Heart right ventricle (tissue), 16 donors: ENCODE measurements at regions of chr10 and their contacts with region 1.

Region 1: DNA sequence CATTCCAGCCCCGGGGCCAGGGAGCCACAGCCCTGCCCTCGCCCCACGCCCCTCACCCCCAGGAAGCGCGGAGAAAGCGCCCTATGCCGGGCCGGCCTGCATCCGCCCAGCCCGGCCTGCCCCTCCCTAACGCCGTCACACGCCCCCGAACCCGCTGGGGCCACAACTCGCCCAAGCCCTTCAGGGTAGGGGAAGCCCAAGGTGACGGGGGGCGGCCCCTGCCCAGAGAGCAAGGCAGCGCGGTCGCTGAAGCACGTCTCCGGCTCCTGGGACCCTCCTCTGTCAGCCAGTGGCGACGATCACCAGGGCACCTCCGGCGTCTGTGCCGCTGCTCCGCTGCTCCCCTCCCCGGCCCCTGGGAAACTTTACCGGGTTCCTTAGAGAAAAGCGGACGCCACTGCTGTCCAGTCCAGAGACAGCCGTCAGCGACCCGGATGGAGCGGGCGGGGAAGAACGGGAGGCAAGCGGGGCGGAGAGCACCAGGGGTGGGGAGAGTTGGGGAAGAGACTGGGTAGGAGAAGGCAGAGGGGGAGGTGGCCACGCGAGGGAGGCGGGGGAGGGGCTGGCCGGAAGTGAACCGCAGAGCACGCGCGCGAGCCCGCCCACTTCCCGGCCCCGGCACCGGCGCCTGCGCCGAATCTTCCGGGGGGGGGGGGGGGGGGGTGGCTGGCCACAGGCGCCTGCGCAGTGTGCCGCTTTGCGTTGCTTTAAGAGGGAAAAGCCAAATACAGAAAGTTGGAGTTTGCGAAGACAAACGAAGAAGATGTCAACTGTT is at the start of gene HERC4:
- DNase-seq: peak; percentile 96
- ATAC-seq: peak; percentile 98 to 99 (median 99)
- H3K4me3 ChIP-seq: peak within 1 kb of the TSS; percentile 76 to 98 (median 94)
- H3K27ac ChIP-seq: peak within 1 kb of the TSS; percentile 94 to 99 (median 98)
- H3K4me1 ChIP-seq: peaks cover 2 to 50% (median 34%) of the 10 kb centered on the region in 9 donors
- H3K27me3 ChIP-seq: no peaks in the 10 kb centered on the region
- CTCF ChIP-seq: no peak
- total RNA-seq, gene HERC4: 23.3 to 42.1 (median 32.3) TPM

Region 2: DNA sequence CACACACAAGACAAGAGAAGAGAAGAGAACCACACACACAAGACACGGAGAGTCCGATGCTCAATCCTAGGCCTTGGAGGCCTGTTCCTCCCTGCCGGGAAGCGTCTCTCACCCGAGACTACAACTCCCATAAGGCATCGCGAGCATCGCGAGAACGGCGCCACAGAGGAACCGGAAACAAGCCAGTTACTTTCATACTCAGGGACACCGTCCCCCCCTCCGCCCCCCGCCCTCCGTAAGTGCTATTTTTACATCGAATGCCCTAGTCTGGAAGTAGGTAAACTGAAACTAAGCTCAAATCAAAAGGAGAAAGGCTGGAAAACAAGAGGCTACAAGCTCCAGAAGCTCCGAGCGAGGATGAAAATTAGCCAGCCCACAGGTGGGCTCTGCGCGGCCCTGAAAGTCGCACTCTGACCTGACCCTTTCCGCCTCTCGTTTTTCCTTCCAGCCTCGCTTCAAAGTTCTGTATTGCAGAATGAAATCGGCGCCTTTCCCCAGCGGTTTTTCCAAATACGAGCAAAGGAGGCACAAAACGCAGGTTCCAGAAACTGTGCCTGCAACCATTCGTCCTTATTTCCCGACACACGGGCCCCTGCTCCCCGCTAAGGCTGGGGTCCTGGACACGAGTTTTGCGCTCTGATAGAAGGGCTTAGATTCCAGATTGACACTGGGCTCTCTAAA is 225.5 kb before region 1 on chr10:
- intact Hi-C with region 1: loop called in 2 of 10 experiments (anchors 10 kb)
- DNase-seq: peak; percentile 98
- ATAC-seq: peak; percentile 94 to 100 (median 99)
- H3K4me3 ChIP-seq: peak overlapping the region; percentile 26 to 86 (median 70)
- H3K27ac ChIP-seq: peak overlapping the region; percentile 70 to 99 (median 93)
- H3K4me1 ChIP-seq: peaks cover 0 to 8% (median 6%) of the 10 kb centered on the region in 9 donors
- H3K27me3 ChIP-seq: no peaks in the 10 kb centered on the region
- CTCF ChIP-seq: peak in 1 of 9 donors; percentile 29

Region 3: DNA sequence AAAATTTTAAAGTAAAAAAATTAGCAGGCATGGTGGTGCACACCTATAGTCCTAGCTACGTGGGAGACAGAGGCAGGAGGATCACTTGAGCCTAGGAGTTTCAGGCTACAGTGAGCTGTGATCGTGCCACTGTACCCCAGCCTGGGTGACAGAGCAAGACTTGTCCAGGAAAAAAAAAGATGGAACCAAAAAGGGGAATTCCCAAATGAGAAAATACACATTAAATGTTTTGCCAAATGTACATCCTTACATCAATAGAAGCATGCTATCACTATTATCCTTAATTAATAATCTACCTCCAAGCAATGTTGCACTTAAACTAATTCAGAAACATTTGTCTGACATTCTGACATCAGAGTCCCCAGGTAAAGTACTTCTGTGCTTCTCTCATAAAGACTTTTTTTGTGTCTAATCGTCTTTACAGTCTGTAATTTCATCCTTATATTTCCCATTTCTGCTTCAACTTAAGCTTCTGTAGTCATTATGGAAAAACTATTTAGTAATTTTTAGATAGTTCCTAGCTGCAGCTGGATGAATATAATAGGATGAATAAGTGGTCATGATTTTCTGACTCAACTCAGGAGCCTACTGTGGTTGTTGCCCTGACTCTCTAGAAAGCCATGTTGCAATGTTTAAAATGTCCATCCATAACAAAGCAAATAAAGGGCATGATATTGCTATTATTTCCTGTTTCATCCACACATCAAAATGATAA is 92.1 kb after region 1 on chr10:
- intact Hi-C with region 1: no loop called
- DNase-seq: no peak
- ATAC-seq: no peak
- H3K4me3 ChIP-seq: no peak overlapping the region
- H3K27ac ChIP-seq: no peak overlapping the region
- H3K4me1 ChIP-seq: no peaks in the 10 kb centered on the region
- H3K27me3 ChIP-seq: no peaks in the 10 kb centered on the region
- CTCF ChIP-seq: no peak

Region 4: GRCh38 chr10:68331455-68332258 is 256.7 kb after region 1 on chr10 and contains the start of gene HNRNPH3:
- intact Hi-C with region 1: loop called in 2 of 10 experiments (anchors 10 kb)
- DNase-seq: peak; percentile 99
- ATAC-seq: peak; percentile 92 to 97 (median 94)
- H3K4me3 ChIP-seq: peak within 1 kb of the TSS; percentile 79 to 96 (median 88)
- H3K27ac ChIP-seq: peak within 1 kb of the TSS; percentile 97 to 100 (median 99)
- H3K4me1 ChIP-seq: peaks cover 0 to 73% (median 42%) of the 10 kb centered on the region in 9 donors
- H3K27me3 ChIP-seq: no peaks in the 10 kb centered on the region
- CTCF ChIP-seq: no peak
- total RNA-seq, gene HNRNPH3: 81.8 to 130 (median 105) TPM